Heart left ventricle (tissue), 16 donors: ENCODE measurements at regions of chr10 and their contacts with region 1.

Region 1: DNA sequence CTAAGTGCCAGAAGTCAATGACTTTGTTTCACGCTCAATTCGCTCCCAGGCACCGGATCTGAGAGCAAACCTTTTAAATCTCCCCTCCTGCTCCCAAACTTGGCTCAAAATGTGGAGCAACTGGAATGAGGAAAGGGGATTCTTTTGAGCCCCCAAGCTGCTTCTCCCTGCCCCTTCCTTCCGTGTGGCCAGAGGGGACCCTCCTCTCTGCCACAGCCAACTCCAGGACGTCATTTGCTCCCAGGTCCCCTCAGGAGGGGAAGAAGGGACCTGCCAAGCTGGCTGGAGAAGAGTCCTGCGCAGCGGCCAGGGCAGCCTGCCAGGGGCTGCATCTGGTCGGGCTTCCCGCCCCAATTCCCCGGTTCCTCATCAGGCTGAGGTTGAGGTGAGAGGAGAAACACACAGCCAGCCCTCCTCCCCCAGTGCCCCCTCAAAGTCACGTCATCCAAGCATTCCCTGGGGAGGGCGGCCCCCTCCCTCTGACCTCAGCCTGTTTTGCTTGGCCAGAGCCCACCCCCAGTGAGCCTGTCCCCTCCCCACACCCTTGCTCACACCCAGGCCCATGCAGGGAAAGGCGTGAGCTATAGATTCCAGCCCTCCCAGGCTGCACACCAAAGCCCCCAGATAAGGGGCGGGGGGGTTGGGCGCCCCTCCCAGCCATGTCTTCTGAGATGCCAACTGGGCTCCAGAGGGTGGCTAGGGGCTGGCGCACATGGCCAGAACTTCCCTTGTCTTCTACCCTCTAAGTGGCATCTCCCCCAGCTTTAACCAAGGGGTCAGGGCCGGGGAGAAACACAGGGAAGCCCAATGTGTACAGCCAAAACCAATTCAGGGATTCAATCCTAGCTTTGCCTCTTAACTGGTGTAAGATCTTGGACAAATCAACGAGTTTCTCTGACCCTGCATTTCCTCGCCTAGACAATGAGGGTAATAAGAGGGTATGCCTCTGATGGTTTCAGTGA is 35.0 kb downstream of the SH3PXD2A start:
- DNase-seq: peak; percentile 83 to 91 (median 86)
- ATAC-seq: peak; percentile 60 to 91 (median 81)
- H3K4me3 ChIP-seq: peak overlapping the region in 4 of 12 donors; percentile 2 to 26 (median 10)
- H3K27ac ChIP-seq: peak overlapping the region in 9 of 12 donors; percentile 2 to 60 (median 54)
- H3K4me1 ChIP-seq: peaks cover 0 to 68% (median 38%) of the 10 kb centered on the region in 12 donors
- H3K27me3 ChIP-seq: no peaks in the 10 kb centered on the region
- CTCF ChIP-seq: no peak
- POLR2A ChIP-seq: no peak

Region 2: GRCh38 chr10:103476046-103476995 is 344.1 kb before region 1 on chr10:
- intact Hi-C with region 1: no loop called
- DNase-seq: no peak
- ATAC-seq: no peak
- H3K4me3 ChIP-seq: no peak overlapping the region
- H3K27ac ChIP-seq: no peak overlapping the region
- H3K4me1 ChIP-seq: peaks cover 0 to 17% (median 0%) of the 10 kb centered on the region in 12 donors
- H3K27me3 ChIP-seq: no peaks in the 10 kb centered on the region
- CTCF ChIP-seq: no peak
- POLR2A ChIP-seq: no peak

Region 3: DNA sequence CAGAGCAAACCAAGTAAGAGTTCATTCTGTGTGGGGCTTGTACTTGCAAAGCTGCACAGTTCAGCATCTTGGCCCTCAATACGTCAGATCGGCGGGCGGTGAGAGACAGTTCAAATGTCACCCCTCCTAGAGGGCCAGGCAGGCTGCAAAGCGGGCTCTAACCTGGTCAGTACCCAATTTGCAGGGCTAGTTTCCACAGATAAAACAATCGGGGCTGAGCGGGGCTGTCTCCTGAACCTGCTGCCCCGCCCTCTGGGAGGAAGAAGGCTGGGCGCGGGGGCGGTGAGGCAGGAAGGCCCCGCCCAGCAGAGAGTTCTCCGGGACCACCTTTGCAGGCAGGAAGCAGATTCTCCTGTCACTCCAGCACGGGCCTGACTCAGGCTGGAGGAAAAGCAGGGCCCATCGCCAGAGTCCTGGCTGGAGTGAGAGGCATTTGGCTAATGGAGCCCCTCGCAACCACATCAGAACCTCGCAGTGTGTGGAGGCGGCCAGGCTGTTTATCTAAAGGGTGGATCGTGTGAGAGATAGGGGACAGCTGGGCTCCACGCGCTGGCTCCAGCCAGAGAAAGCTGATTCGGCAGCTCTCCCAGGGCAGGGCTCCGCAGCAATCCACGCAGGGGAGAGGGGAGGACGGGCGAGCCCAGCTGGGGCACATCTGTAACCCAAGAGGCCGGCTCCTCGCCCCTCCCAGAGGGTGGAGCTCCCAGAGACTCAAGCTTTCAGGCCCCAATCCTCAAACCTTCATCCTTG is 48.1 kb before region 1 on chr10:
- intact Hi-C with region 1: loop called in 1 of 10 experiments (anchors 5 kb)
- DNase-seq: peak; percentile 86 to 92 (median 89)
- ATAC-seq: peak; percentile 83 to 93 (median 90)
- H3K4me3 ChIP-seq: peak overlapping the region in 10 of 12 donors; percentile 22 to 59 (median 44)
- H3K27ac ChIP-seq: peak overlapping the region; percentile 56 to 89 (median 78)
- H3K4me1 ChIP-seq: peaks cover 0 to 40% (median 18%) of the 10 kb centered on the region in 12 donors
- H3K27me3 ChIP-seq: no peaks in the 10 kb centered on the region
- CTCF ChIP-seq: no peak
- POLR2A ChIP-seq: peak in 1 of 2 donors; percentile 23